Heart left ventricle (tissue), 16 donors: ENCODE measurements at regions of chr16 and their contacts with region 1.

Region 1: GRCh38 chr16:66728117-66728787 is 23.2 kb downstream of the DYNC1LI2 start:
- DNase-seq: peak in 4 of 5 donors; percentile 30 to 47 (median 40)
- ATAC-seq: peak; percentile 75 to 88 (median 83)
- H3K4me3 ChIP-seq: no peak overlapping the region
- H3K27ac ChIP-seq: no peak overlapping the region
- H3K4me1 ChIP-seq: peaks cover 0 to 15% (median 4%) of the 10 kb centered on the region in 12 donors
- H3K27me3 ChIP-seq: no peaks in the 10 kb centered on the region
- CTCF ChIP-seq: peak; percentile 46 to 80 (median 70)
- POLR2A ChIP-seq: no peak

Region 2: DNA sequence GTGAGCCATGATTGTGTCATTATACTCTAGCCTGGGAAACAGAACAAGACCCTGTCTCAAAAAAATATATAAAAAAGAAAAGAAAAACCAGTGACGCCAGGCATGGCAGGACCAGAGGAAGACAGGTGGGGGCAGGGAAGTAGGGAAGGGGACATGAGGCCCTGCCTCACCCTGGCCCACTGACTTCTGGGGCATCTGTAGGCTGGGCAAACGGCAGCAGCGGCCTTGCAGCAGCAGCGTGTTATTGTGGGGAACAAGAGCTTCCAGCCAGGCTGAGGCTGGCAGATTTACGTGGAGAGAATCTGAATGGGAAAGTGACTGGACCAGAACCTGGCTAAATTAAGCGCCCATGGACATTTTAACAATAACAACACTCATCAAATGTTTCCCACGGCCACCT is 51.1 kb before region 1 on chr16:
- intact Hi-C with region 1: no loop called
- DNase-seq: no peak
- ATAC-seq: no peak
- H3K4me3 ChIP-seq: no peak overlapping the region
- H3K27ac ChIP-seq: no peak overlapping the region
- H3K4me1 ChIP-seq: peaks cover 0 to 6% (median 0%) of the 10 kb centered on the region in 12 donors
- H3K27me3 ChIP-seq: no peaks in the 10 kb centered on the region
- CTCF ChIP-seq: no peak
- POLR2A ChIP-seq: no peak

Region 3: GRCh38 chr16:66810391-66810790 is 82.1 kb after region 1 on chr16:
- intact Hi-C with region 1: loop called in 2 of 10 experiments (anchors 5 to 10 kb)
- DNase-seq: no peak
- ATAC-seq: peak in 2 of 4 donors; percentile 28 to 65
- H3K4me3 ChIP-seq: no peak overlapping the region
- H3K27ac ChIP-seq: no peak overlapping the region
- H3K4me1 ChIP-seq: no peaks in the 10 kb centered on the region
- H3K27me3 ChIP-seq: no peaks in the 10 kb centered on the region
- CTCF ChIP-seq: no peak
- POLR2A ChIP-seq: no peak